CD8-positive, alpha-beta T cell (primary cell): ENCODE measurements at regions of chr6 and their contacts with region 1.

Region 1: GRCh38 chr6:137571854-137572253 is 77.7 kb upstream of the OLIG3 start:
- DNase-seq: peak; percentile 42 to 75 (median 65)
- ATAC-seq: peak; percentile 64
- H3K4me3 ChIP-seq: no peak overlapping the region
- H3K4me3 Mint-ChIP-seq: no peak overlapping the region
- H3K27ac ChIP-seq: no peak overlapping the region
- H3K27ac Mint-ChIP-seq: no peak overlapping the region
- H3K4me1 ChIP-seq: no peaks in the 10 kb centered on the region
- H3K4me1 Mint-ChIP-seq: no peaks in the 10 kb centered on the region
- H3K27me3 ChIP-seq: no peaks in the 10 kb centered on the region
- H3K27me3 Mint-ChIP-seq: peaks cover 8% of the 10 kb centered on the region
- CTCF ChIP-seq: peak; percentile 90

Region 2: GRCh38 chr6:137489046-137490005 is 82.5 kb before region 1 on chr6:
- CTCF ChIA-PET with region 1: no interaction called
- POLR2A ChIA-PET with region 1: no interaction called
- intact Hi-C with region 1: loop called in 1 of 2 experiments (anchors 2 kb)
- DNase-seq: no peak
- ATAC-seq: no peak
- H3K4me3 ChIP-seq: peak overlapping the region in 1 of 2 experiments; percentile 22
- H3K4me3 Mint-ChIP-seq: peak overlapping the region; percentile 55
- H3K27ac ChIP-seq: no peak overlapping the region
- H3K27ac Mint-ChIP-seq: no peak overlapping the region
- H3K4me1 ChIP-seq: peaks cover 48% of the 10 kb centered on the region
- H3K4me1 Mint-ChIP-seq: peaks cover 38% of the 10 kb centered on the region
- H3K27me3 ChIP-seq: peaks cover 65 to 81% of the 10 kb centered on the region in 2 experiments
- H3K27me3 Mint-ChIP-seq: peaks cover 82% of the 10 kb centered on the region
- CTCF ChIP-seq: no peak